ENCODE measurements at regions of chr11 and their contacts with region 1.

Region 1: DNA sequence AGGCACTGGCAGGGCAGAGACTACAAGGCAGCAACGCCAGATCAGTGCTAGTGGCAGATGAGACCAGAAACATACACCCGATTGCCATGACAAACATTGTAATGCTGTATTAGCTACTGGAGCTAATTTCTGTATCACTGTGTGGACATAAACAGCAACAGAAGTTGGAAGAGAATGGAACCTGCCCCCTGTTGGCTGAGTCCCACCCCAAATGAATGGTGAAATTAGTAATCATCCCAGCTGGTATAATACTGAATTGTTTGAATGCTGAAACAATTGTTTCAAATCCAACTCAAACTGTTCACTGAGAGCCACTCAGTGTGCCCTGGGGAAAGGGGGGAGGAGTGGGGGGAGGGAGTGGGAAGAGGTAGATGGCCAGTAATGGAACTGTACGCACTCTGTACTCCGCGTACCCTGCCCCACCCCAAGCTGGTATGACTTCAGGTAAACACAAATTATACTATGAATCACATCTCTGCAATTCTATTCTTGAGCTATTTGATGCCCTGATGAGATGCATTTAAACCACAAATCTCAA is 11.2 kb upstream of the BIRC3 start:
- DNase-seq: no peak
- ATAC-seq: no peak
- H3K4me3 Mint-ChIP-seq: no peak overlapping the region
- H3K27ac Mint-ChIP-seq: no peak overlapping the region
- H3K4me1 Mint-ChIP-seq: peaks cover 13% of the 10 kb centered on the region
- H3K27me3 Mint-ChIP-seq: no peaks in the 10 kb centered on the region; the same call in 1 of the 2 replicates
- CTCF ChIP-seq: no peak

Region 2: GRCh38 chr11:102237096-102237735 is 68.9 kb before region 1 on chr11:
- CTCF ChIA-PET with region 1: no interaction called
- POLR2A ChIA-PET with region 1: no interaction called
- DNase-seq: no peak
- ATAC-seq: no peak
- H3K4me3 Mint-ChIP-seq: no peak overlapping the region
- H3K27ac Mint-ChIP-seq: no peak overlapping the region
- H3K4me1 Mint-ChIP-seq: peaks cover 34% of the 10 kb centered on the region
- H3K27me3 Mint-ChIP-seq: no peaks in the 10 kb centered on the region
- CTCF ChIP-seq: no peak

Region 3: GRCh38 chr11:102279641-102280170 is 26.4 kb before region 1 on chr11:
- CTCF ChIA-PET with region 1: interaction called, 11 read pairs
- POLR2A ChIA-PET with region 1: no interaction called
- DNase-seq: no peak
- ATAC-seq: peak; percentile 31
- H3K4me3 Mint-ChIP-seq: peak overlapping the region; percentile 54
- H3K27ac Mint-ChIP-seq: peak overlapping the region; percentile 58
- H3K4me1 Mint-ChIP-seq: peaks cover 35% of the 10 kb centered on the region
- H3K27me3 Mint-ChIP-seq: no peaks in the 10 kb centered on the region
- CTCF ChIP-seq: no peak

Region 4: DNA sequence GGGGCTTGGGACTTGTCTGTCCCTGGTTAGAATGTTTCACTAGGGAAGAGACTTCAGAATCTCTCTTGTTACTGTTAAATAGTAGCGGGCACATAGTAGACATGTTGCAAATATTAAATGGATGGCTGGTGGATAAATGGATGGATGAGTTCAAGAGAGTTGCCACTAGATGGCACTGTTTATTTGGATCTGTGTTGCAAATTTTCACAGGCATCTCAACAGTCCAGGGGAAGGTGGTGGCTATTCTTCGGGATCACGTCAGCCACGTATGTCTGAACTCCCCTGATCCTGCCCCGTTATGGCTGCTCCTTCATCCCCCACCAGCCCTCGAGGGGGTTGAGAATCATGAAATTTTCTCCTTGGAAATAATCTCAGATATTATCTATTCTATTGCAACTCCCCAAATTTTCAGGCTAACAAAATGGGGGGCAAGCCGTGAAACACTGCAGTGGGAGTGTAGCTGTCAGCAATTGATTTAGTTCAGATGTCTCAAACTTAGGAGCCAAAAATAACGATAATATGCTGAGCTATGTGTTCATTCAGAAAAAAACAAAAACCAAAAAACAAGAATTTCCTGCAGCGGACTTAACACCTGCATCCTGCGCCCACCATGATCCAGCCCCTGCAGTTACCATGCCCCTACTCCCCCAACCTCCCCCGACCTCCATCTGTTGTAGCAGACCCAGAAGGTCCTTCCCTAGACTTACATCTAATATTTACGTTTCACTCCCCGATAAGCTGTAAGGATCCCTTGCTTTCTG is 18.0 kb before region 1 on chr11:
- CTCF ChIA-PET with region 1: interaction called, 28 read pairs
- POLR2A ChIA-PET with region 1: no interaction called
- DNase-seq: no peak
- ATAC-seq: peak; percentile 90
- H3K4me3 Mint-ChIP-seq: 0 out of 2 replicates have a peak overlapping the region, but pooled peaks have one; percentile 19
- H3K27ac Mint-ChIP-seq: no peak overlapping the region
- H3K4me1 Mint-ChIP-seq: peaks cover 30% of the 10 kb centered on the region
- H3K27me3 Mint-ChIP-seq: no peaks in the 10 kb centered on the region
- CTCF ChIP-seq: peak; percentile 54

Region 5: DNA sequence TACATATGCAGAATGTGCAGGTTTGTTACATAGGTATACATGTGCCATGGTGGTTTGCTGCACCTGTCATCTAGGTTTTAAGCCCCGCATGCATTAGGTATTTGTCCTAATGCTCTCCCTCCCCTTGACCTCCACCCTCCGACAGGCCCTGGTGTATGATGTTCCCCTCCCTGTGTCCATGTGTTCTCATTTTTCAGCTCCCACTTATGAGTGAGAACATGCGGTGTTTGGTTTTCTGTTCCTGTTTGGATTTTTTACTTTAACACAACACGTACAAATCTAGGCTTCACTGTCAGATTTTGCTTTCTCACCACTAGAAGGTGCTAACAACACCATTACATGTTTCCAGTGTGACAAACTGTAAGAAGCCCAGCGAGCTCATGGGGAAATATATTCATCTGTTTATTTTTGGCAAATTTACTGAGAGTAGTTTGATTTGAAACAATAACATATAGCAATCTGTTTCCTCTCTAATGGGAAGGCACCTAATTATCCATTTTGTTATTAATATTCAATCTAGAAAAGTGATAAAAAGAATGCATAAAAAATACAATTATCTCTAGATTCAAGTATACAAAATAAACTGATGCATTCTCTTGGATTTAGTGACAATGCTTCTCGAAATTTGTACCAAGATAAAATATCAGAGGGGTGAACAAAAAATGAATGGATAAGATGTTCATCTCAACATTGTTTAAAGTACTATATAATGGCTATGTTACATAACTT is 12.1 kb before region 1 on chr11:
- CTCF ChIA-PET with region 1: interaction called, 28 read pairs
- POLR2A ChIA-PET with region 1: no interaction called
- DNase-seq: no peak
- ATAC-seq: peak; percentile 72
- H3K4me3 Mint-ChIP-seq: no peak overlapping the region
- H3K27ac Mint-ChIP-seq: no peak overlapping the region
- H3K4me1 Mint-ChIP-seq: peaks cover 12% of the 10 kb centered on the region
- H3K27me3 Mint-ChIP-seq: no peaks in the 10 kb centered on the region; the same call in 1 of the 2 replicates
- CTCF ChIP-seq: 0 out of 2 replicates have a peak, but pooled peaks have one; percentile 35

Region 6: DNA sequence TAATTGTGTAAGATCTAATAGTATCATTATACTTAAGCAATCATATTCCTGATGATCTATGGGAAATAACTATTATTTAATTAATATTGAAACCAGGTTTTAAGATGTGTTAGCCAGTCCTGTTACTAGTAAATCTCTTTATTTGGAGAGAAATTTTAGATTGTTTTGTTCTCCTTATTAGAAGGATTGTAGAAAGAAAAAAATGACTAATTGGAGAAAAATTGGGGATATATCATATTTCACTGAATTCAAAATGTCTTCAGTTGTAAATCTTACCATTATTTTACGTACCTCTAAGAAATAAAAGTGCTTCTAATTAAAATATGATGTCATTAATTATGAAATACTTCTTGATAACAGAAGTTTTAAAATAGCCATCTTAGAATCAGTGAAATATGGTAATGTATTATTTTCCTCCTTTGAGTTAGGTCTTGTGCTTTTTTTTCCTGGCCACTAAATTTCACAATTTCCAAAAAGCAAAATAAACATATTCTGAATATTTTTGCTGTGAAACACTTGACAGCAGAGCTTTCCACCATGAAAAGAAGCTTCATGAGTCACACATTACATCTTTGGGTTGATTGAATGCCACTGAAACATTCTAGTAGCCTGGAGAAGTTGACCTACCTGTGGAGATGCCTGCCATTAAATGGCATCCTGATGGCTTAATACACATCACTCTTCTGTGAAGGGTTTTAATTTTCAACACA is 17.6 kb after region 1 on chr11:
- CTCF ChIA-PET with region 1: interaction called, 11 read pairs
- POLR2A ChIA-PET with region 1: no interaction called
- DNase-seq: no peak
- ATAC-seq: no peak
- H3K4me3 Mint-ChIP-seq: no peak overlapping the region
- H3K27ac Mint-ChIP-seq: no peak overlapping the region
- H3K4me1 Mint-ChIP-seq: no peaks in the 10 kb centered on the region
- H3K27me3 Mint-ChIP-seq: peaks cover 4% of the 10 kb centered on the region; the same call in 1 of the 2 replicates
- CTCF ChIP-seq: no peak

Measured in WTC11 (cell line).